ENCODE measurements at regions of chr6 and their contacts with region 1.

Region 1: GRCh38 chr6:43769526-43770416 is at the start of gene VEGFA:
- DNase-seq: peak; percentile 92
- H3K4me3 Mint-ChIP-seq: peak within 1 kb of the TSS; percentile 93
- H3K27ac Mint-ChIP-seq: peak within 1 kb of the TSS; percentile 82
- H3K4me1 Mint-ChIP-seq: peaks cover 20% of the 10 kb centered on the region
- H3K27me3 Mint-ChIP-seq: peaks cover 8% of the 10 kb centered on the region
- total RNA-seq, gene VEGFA: 28.9 to 35.1 TPM

Region 2: DNA sequence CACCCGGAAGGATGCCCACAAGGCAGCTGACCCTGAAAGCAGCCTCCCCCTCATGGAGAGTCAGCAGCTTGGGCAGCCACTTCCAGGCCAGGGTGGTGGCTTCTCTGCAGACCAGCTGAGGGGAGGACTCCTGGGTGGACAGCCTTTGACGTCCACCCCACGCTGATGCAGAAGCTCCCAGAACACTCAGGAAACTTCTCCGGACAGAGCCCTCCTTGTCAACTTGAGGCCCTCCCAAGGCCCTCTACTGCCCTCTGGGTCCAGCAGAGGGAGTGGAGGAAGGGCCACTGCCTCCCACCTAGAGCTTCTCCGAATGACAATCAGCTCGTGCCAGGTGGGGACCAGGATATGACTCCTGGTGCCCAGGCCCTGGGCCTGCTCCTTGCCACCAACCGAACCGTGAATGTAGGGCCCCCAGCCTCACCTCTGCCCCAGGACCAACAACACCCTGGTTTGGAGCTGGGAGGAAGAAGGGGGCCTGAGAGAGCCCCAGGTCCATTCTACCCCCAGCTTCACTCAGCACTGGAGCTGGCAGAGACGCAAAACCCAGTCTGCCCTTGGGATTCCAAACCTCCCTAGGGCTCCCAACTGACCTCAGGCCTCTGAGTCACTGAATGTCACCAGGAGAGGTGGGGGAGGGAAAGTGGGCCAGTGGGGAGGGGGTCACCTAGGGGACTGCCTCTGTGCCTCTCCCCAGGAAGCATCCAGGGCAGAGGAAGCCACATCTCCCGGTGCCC is 482.6 kb before region 1 on chr6:
- CTCF ChIA-PET with region 1: no interaction called
- POLR2A ChIA-PET with region 1: no interaction called
- intact Hi-C with region 1: no loop called
- DNase-seq: no peak
- H3K4me3 Mint-ChIP-seq: no peak overlapping the region
- H3K27ac Mint-ChIP-seq: no peak overlapping the region
- H3K4me1 Mint-ChIP-seq: no peaks in the 10 kb centered on the region
- H3K27me3 Mint-ChIP-seq: peaks cover 20% of the 10 kb centered on the region

Region 3: GRCh38 chr6:43575772-43576551 is 193.8 kb before region 1 on chr6 and contains the starts of genes POLH and XPO5:
- CTCF ChIA-PET with region 1: no interaction called
- POLR2A ChIA-PET with region 1: no interaction called
- intact Hi-C with region 1: loop called (anchors 10 kb)
- DNase-seq: peak; percentile 94
- H3K4me3 Mint-ChIP-seq: peak within 1 kb of the TSS; percentile 97
- H3K27ac Mint-ChIP-seq: peak within 1 kb of the TSS; percentile 85
- H3K4me1 Mint-ChIP-seq: peaks cover 52% of the 10 kb centered on the region
- H3K27me3 Mint-ChIP-seq: no peaks in the 10 kb centered on the region
- total RNA-seq, gene POLH: 52.1 to 52.5 TPM
- total RNA-seq, gene XPO5: 83.7 to 97.9 TPM

Region 4: DNA sequence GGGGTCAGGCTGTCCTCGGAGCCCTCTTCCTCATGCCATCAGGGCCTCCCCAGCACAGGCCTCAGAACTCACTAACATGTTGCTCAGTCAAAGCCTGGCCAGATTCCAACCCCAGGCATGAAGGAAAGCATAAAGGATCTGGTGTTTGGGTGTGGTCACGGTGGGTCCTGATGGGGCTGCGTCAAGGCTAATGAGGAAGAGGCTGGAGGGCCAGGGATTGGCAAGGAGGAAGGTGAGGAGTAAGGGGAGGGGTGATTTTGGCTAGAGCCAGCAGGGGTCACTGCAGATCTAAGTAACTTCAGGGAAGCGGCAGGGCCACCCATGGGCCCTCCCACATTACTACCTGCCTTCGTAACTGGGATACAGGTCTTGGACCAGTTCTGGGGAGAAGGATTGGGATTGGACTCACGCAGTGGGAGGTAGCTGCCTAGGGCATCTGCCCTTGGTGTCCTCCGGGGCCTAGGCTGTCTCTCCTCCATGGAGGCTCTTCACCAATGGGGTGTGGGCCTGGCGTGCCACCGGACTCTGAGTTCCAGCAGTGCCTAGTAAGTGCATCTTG is 46.0 kb before region 1 on chr6:
- CTCF ChIA-PET with region 1: interaction called, 26 read pairs
- POLR2A ChIA-PET with region 1: interaction called, 17 read pairs
- intact Hi-C with region 1: loop called (anchors 1 kb)
- DNase-seq: peak; percentile 86
- H3K4me3 Mint-ChIP-seq: no peak overlapping the region
- H3K27ac Mint-ChIP-seq: no peak overlapping the region
- H3K4me1 Mint-ChIP-seq: peaks cover 24% of the 10 kb centered on the region
- H3K27me3 Mint-ChIP-seq: no peaks in the 10 kb centered on the region

Region 5: DNA sequence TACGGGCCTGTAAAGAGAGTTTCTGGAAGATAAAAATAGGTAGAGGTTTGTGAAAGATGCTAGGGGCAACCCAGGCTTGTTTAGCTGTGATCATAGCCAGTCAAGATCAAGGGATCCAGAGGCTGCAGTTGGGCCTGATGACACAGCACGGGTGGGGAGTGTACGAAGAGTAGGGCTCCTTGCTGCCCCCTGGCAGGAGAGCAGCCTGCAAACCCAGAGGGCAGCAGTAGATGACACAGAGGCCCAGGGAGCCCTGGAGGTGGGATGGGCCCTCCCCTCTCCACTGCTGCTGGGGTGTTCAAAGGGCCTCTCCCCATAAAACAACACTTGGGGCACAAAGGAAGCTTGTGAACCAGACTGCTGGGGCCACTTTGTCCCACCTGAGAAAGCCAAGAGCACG is 47.4 kb after region 1 on chr6:
- CTCF ChIA-PET with region 1: interaction called, 4 read pairs
- POLR2A ChIA-PET with region 1: no interaction called
- intact Hi-C with region 1: loop called (anchors 1 kb)
- DNase-seq: peak; percentile 42
- H3K4me3 Mint-ChIP-seq: no peak overlapping the region
- H3K27ac Mint-ChIP-seq: no peak overlapping the region
- H3K4me1 Mint-ChIP-seq: peaks cover 9% of the 10 kb centered on the region
- H3K27me3 Mint-ChIP-seq: peaks cover 4% of the 10 kb centered on the region

Region 6: GRCh38 chr6:44064089-44064947 is 294.5 kb after region 1 on chr6:
- CTCF ChIA-PET with region 1: interaction called, 11 read pairs
- POLR2A ChIA-PET with region 1: interaction called, 3 read pairs
- intact Hi-C with region 1: no loop called
- DNase-seq: peak; percentile 59
- H3K4me3 Mint-ChIP-seq: no peak overlapping the region
- H3K27ac Mint-ChIP-seq: no peak overlapping the region
- H3K4me1 Mint-ChIP-seq: peaks cover 5% of the 10 kb centered on the region
- H3K27me3 Mint-ChIP-seq: peaks cover 6% of the 10 kb centered on the region

Region 7: DNA sequence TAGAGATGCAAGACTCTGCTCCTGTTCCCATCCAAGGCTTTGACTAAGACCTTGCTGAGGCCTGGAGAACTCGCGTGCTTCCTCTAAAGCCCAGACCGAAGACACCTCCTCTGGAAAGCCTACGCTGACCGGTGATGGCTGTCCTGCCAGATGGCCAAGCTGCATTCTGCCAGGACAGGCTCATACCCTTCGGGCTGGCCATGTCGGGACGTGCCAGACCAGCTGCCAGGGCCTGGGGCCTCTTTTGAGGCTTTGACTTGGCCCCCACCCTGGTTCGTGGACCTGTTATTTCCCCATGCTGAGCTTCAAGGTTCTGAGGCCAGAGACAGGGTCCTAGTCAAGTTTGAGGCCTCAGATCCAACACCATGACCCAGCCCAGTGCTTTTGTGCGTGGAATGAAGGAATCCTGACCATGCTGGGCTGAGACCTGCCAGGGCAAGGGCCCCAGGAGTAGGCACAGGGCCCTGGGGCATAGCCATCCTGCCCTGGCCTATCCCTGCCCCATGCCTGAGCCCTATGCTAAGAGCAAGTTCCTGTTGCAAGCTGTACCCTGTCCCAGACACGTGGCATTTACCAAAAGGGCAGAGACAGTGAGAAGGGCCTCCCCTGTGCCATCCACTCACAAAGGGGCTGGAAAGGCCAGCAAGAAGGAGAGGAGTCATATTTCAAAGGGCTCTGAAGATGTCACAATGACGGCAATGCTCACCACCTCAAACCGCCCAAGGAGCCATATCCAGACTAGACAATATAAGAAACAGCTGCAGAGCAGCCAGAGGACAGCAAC is 314.7 kb after region 1 on chr6:
- CTCF ChIA-PET with region 1: interaction called, 172 read pairs
- POLR2A ChIA-PET with region 1: interaction called, 6 read pairs
- intact Hi-C with region 1: loop called (anchors 1 kb)
- DNase-seq: no peak
- H3K4me3 Mint-ChIP-seq: no peak overlapping the region
- H3K27ac Mint-ChIP-seq: no peak overlapping the region
- H3K4me1 Mint-ChIP-seq: no peaks in the 10 kb centered on the region
- H3K27me3 Mint-ChIP-seq: no peaks in the 10 kb centered on the region